H1 (cell line): ENCODE measurements at regions of chr12 and their contacts with region 1.

Region 1: GRCh38 chr12:53543539-53543938 is 36.3 kb upstream of the NPFF start:
- DNase-seq: peak in 1 of 2 experiments; percentile 47
- H3K4me3 ChIP-seq: no peak overlapping the region
- H3K27ac ChIP-seq: no peak overlapping the region
- H3K4me1 ChIP-seq: 0 out of 7 replicates have a peak, but pooled peaks cover 0 to 5% (median 0%) of the 10 kb centered on the region in 4 experiments
- H3K27me3 ChIP-seq: no peaks in the 10 kb centered on the region
- CTCF ChIP-seq: peak; percentile 82 to 99 (median 92)
- EP300 ChIP-seq: no peak
- POLR2A ChIP-seq: no peak
- RAD21 ChIP-seq: peak; percentile 82 to 86

Region 2: DNA sequence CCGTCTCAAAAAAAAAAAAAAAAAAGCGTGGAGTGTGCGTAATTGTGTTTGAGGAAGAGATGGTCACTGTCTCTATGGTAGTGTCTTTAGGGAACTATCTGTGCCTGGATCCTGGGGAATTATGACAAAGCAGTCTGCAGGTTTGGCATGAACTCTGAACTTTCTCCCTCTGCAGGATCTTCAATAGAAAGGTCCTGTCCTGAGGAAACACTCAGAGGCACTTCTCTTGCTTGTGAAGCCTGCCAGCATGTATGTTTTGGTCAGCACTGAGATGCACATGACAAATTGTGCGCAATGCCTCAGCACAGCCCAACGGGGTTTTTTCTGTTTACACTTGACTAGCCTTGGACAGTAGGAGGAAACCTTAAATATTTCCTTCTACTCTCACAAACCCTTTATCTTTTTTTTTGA is 36.0 kb after region 1 on chr12:
- CTCF ChIA-PET with region 1: interaction called, 10 read pairs
- POLR2A ChIA-PET with region 1: interaction called, 3 read pairs
- DNase-seq: no peak
- H3K4me3 ChIP-seq: no peak overlapping the region
- H3K27ac ChIP-seq: no peak overlapping the region
- H3K4me1 ChIP-seq: no peaks in the 10 kb centered on the region
- H3K27me3 ChIP-seq: no peaks in the 10 kb centered on the region
- CTCF ChIP-seq: no peak
- EP300 ChIP-seq: no peak
- POLR2A ChIP-seq: no peak
- RAD21 ChIP-seq: no peak